Dendritic cell treated with granulocyte-macrophage colony-stimulating factor and Interleukin-4, amounts not matched to agents 40 ng/mL and 50 ng/mL, for 4 days (primary cell): ENCODE measurements at regions of chr11 and their contacts with region 1.

Region 1: DNA sequence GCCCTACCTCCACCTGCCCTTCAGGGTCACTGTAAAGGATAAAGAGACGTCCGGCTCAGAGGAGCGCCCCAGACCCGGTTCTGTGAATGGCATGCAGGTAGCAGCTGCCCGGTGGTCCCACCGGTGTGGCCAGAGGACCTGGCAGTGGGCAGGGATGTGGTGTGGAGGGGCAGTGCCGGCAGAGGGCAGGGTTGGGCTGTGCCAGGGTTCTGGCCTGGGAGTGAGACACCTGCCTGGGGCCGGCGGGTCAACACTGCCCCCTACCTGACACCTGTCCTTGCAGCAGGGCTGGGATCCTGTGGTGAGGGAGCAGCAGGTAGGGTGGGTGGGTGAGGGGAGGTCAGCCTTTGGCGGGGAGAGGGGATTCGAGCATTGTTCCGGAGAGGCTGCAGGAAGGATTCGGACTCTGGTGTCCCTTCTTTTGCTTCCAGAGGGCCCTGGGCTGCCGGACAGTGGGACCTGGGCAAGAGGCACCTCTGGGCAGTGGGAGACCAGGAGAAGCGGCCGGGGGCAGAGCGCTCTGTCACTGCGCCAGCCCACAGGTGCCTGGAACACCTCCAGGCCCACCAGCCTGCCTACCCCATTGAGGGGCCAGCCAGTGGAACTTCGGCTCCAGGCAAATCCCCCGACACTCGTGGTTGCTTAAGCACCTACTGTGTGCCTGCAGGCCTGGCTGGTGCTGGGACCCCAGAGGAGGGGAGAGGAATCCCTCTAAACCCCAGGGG is 1.6 kb upstream of the PHLDA2 start:
- H3K4me3 Mint-ChIP-seq: peak overlapping the region; percentile 84
- H3K27ac Mint-ChIP-seq: peak overlapping the region; percentile 96
- H3K4me1 Mint-ChIP-seq: peaks cover 67% of the 10 kb centered on the region
- H3K27me3 Mint-ChIP-seq: peaks cover 26% of the 10 kb centered on the region

Region 2: GRCh38 chr11:2825889-2826678 is 104.8 kb before region 1 on chr11:
- intact Hi-C with region 1: no loop called
- H3K4me3 Mint-ChIP-seq: peak overlapping the region; percentile 27
- H3K27ac Mint-ChIP-seq: peak overlapping the region; percentile 83
- H3K4me1 Mint-ChIP-seq: peaks cover 72% of the 10 kb centered on the region
- H3K27me3 Mint-ChIP-seq: peaks cover 2% of the 10 kb centered on the region

Region 3: GRCh38 chr11:2885676-2886081 is 45.2 kb before region 1 on chr11 and contains the start of gene CDKN1C:
- intact Hi-C with region 1: no loop called
- H3K4me3 Mint-ChIP-seq: peak within 1 kb of the TSS; percentile 86
- H3K27ac Mint-ChIP-seq: peak within 1 kb of the TSS; percentile 72
- H3K4me1 Mint-ChIP-seq: peaks cover 11% of the 10 kb centered on the region
- H3K27me3 Mint-ChIP-seq: peaks cover 71% of the 10 kb centered on the region

Region 4: DNA sequence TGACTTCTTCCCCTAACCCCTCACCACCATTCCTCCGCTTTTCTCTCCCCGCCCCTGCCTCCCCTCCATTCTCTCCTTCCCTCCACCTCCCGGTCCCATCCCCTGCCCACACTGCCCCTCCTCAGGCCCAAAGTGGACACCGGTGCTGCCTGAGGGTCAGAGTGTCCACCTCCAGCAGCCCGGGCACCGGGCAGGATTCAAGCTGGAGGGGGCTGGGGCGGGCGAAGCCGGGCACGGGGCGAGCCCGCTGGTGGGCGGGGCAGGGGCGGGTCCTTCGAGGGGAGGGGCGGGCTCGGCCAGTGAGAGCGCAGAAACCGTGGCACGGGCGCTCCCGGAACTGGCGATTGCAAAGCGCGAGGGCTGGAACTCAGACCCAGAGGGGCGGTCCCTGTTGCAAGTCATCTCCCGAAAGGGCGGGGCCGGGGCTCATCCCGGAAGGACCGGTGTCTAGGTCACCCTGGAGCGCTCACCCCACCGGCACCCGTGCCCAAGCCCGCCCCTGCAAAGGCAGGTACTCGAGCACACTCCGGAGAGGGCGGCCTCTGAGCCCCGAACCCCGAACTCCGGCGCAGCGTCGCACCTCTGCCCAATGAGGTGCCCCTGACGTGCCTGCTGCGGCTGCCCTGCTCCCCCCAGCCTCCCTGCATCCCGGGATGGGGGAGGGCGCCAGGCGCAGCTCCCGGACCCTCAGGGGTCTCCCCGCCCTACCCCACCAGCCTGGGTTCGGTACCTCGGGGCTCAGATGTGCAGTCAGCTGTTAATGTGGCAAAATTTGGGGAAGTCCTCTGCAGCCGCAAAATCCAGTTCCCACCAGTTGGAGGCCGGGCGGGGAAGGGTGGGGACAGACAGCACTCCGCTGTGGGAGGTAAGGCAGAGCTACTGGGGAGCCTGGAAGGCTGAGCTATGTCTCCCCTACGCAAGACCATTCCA is 28.7 kb before region 1 on chr11:
- intact Hi-C with region 1: loop called (anchors 1 kb)
- H3K4me3 Mint-ChIP-seq: peak overlapping the region; percentile 75
- H3K27ac Mint-ChIP-seq: peak overlapping the region; percentile 83
- H3K4me1 Mint-ChIP-seq: peaks cover 74% of the 10 kb centered on the region
- H3K27me3 Mint-ChIP-seq: peaks cover 7% of the 10 kb centered on the region

Region 5: GRCh38 chr11:3057069-3057963 is 126.5 kb after region 1 on chr11 and contains the start of gene CARS1:
- intact Hi-C with region 1: loop called (anchors 10 kb)
- H3K4me3 Mint-ChIP-seq: peak within 1 kb of the TSS; percentile 84
- H3K27ac Mint-ChIP-seq: peak within 1 kb of the TSS; percentile 91
- H3K4me1 Mint-ChIP-seq: peaks cover 46% of the 10 kb centered on the region
- H3K27me3 Mint-ChIP-seq: peaks cover 6% of the 10 kb centered on the region